BJ (cell line): ENCODE measurements at regions of chr10 and their contacts with region 1.

Region 1: GRCh38 chr10:73732931-73733623 is 11.1 kb upstream of the SEC24C start:
- DNase-seq: no peak
- H3K4me3 ChIP-seq: no peak overlapping the region
- H3K27me3 ChIP-seq: no peaks in the 10 kb centered on the region
- CTCF ChIP-seq: no peak

Region 2: DNA sequence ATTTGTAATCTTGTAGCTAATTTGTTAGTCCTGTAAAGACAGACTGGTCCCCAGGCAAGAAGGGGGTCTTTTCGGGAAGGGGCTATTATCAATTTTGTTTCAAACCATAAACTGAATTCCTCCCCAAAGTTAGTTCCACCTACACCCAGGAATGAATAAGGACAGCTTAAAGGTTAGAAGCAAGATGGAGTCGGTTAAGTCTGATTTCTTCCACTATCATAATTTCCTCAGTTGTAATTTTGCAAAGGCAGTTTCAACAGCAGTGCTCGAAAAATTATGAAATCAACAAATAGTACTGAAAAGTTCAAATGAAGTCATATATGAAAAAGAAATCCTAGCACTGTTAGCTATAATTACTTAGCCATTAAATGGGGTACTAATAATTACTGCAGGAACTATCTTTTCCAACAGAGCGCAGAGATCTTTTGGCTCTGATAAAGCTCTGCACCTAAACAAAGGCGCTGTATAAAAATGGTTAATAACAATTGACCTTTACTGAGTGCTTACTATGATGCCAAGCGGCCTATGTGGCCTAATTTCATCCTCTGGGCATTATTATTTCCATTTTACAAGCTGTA is 10.3 kb after region 1 on chr10:
- CTCF ChIA-PET with region 1: interaction called, 5 read pairs
- POLR2A ChIA-PET with region 1: interaction called, 15 read pairs
- DNase-seq: no peak
- H3K4me3 ChIP-seq: peak overlapping the region; percentile 81
- H3K27me3 ChIP-seq: no peaks in the 10 kb centered on the region
- CTCF ChIP-seq: no peak

Region 3: GRCh38 chr10:74176380-74177139 is 443.5 kb after region 1 on chr10:
- CTCF ChIA-PET with region 1: no interaction called
- POLR2A ChIA-PET with region 1: no interaction called
- DNase-seq: peak; percentile 75
- H3K4me3 ChIP-seq: peak overlapping the region; percentile 62
- H3K27me3 ChIP-seq: no peaks in the 10 kb centered on the region
- CTCF ChIP-seq: no peak